IMR-90 (cell line): ENCODE measurements at regions of chr14 and their contacts with region 1.

Region 1: DNA sequence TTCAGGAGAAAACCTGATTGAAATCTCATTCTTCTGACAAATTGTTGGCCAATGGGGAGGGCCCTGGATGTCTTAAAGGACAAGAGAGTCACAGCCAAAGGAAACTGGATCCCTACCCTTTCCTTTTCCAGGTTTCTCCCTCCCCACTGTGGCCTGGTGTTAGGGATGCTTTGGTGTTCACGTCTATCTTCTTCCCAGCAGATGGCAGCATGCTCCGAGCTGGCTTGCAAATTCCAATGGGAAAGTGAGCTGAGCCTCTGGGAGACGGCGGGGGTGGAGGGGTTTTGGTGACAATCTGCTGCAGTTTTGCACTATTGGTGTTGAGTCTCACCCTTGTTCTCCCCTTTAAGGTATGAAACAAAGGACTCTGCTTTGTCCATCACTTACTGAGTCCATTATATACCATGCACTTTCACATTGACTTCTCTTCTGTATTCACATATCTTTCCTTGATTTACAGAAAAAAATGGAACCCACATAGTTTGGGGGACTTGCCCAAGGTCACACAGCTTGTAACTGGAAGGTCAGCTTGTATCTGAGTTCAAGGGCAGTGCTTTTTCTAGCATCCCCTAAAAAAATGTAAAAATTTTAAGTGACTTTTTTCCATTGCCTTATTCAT is 39.3 kb downstream of the CCDC177 start:
- DNase-seq: peak; percentile 50
- ATAC-seq: peak; percentile 93
- H3K4me3 ChIP-seq: no peak overlapping the region
- H3K27ac ChIP-seq: no peak overlapping the region
- H3K4me1 ChIP-seq: no peaks in the 10 kb centered on the region
- H3K27me3 ChIP-seq: peaks cover 35% of the 10 kb centered on the region
- CTCF ChIP-seq: peak; percentile 71
- POLR2A ChIP-seq: no peak
- RAD21 ChIP-seq: peak; percentile 71

Region 2: GRCh38 chr14:69574263-69574953 is 39.1 kb after region 1 on chr14 and contains the start of gene CCDC177:
- CTCF ChIA-PET with region 1: interaction called, 7 read pairs
- POLR2A ChIA-PET with region 1: no interaction called
- dilution Hi-C with region 1: no loop called
- in situ Hi-C with region 1: no loop called
- intact Hi-C with region 1: loop called (anchors 1 kb)
- DNase-seq: peak; percentile 48
- ATAC-seq: peak; percentile 77
- H3K4me3 ChIP-seq: no peak within 1 kb of the TSS; the same call in 1 of the 2 replicates
- H3K27ac ChIP-seq: no peak within 1 kb of the TSS
- H3K4me1 ChIP-seq: peaks cover 3% of the 10 kb centered on the region; the same call in 1 of the 2 replicates
- H3K27me3 ChIP-seq: peaks cover 70% of the 10 kb centered on the region
- CTCF ChIP-seq: peak; percentile 80
- POLR2A ChIP-seq: no peak
- RAD21 ChIP-seq: peak; percentile 69
- total RNA-seq, gene CCDC177: not detected in 2 replicates

Region 3: GRCh38 chr14:69726761-69727511 is 191.6 kb after region 1 on chr14:
- CTCF ChIA-PET with region 1: interaction called, 4 read pairs
- POLR2A ChIA-PET with region 1: no interaction called
- dilution Hi-C with region 1: no loop called
- in situ Hi-C with region 1: no loop called
- intact Hi-C with region 1: loop called (anchors 1 kb)
- DNase-seq: peak; percentile 58
- ATAC-seq: peak; percentile 97
- H3K4me3 ChIP-seq: peak overlapping the region; percentile 57
- H3K27ac ChIP-seq: peak overlapping the region; percentile 46
- H3K4me1 ChIP-seq: peaks cover 2% of the 10 kb centered on the region
- H3K27me3 ChIP-seq: no peaks in the 10 kb centered on the region
- CTCF ChIP-seq: peak; percentile 92
- POLR2A ChIP-seq: peak; percentile 67
- RAD21 ChIP-seq: peak; percentile 97

Region 4: GRCh38 chr14:69838881-69839416 is 303.6 kb after region 1 on chr14:
- CTCF ChIA-PET with region 1: no interaction called
- POLR2A ChIA-PET with region 1: no interaction called
- dilution Hi-C with region 1: no loop called
- in situ Hi-C with region 1: no loop called
- intact Hi-C with region 1: no loop called
- DNase-seq: no peak
- ATAC-seq: no peak
- H3K4me3 ChIP-seq: no peak overlapping the region
- H3K27ac ChIP-seq: no peak overlapping the region
- H3K4me1 ChIP-seq: no peaks in the 10 kb centered on the region
- H3K27me3 ChIP-seq: peaks cover 33% of the 10 kb centered on the region
- CTCF ChIP-seq: no peak
- POLR2A ChIP-seq: no peak
- RAD21 ChIP-seq: no peak

Region 5: DNA sequence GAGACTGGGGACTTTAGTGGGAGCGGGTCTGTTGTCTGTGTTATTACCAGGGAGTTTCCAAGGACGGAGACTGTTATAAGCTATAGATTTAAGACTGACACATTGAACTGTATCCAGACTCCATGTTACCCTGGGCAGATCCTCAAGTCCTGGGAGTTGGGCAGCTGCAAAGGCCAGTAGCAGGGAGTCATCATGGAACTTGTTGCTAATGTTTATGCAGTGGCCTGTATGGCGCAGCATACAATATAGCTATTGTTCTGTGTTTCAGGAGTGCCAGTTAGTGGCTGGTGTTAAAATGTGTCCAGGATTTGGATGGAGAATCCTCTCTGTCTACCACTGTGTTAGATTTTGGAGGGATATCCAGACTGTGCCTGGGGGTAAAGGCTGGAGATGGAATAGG is 375.5 kb after region 1 on chr14:
- CTCF ChIA-PET with region 1: no interaction called
- POLR2A ChIA-PET with region 1: no interaction called
- dilution Hi-C with region 1: no loop called
- in situ Hi-C with region 1: no loop called
- intact Hi-C with region 1: no loop called
- DNase-seq: no peak
- ATAC-seq: no peak
- H3K4me3 ChIP-seq: no peak overlapping the region
- H3K27ac ChIP-seq: no peak overlapping the region
- H3K4me1 ChIP-seq: peaks cover 8% of the 10 kb centered on the region
- H3K27me3 ChIP-seq: no peaks in the 10 kb centered on the region
- CTCF ChIP-seq: no peak
- POLR2A ChIP-seq: no peak
- RAD21 ChIP-seq: no peak